CD4-positive, alpha-beta memory T cell (primary cell): ENCODE measurements at regions of chr5 and their contacts with region 1.

Region 1: GRCh38 chr5:138128334-138128733 is 10.9 kb downstream of the NME5 start:
- DNase-seq: no peak
- H3K4me3 ChIP-seq: no peak overlapping the region
- H3K4me3 Mint-ChIP-seq: no peak overlapping the region
- H3K27ac ChIP-seq: no peak overlapping the region
- H3K27ac Mint-ChIP-seq: no peak overlapping the region
- H3K4me1 ChIP-seq: no peaks in the 10 kb centered on the region
- H3K4me1 Mint-ChIP-seq: no peaks in the 10 kb centered on the region
- H3K27me3 ChIP-seq: no peaks in the 10 kb centered on the region
- H3K27me3 Mint-ChIP-seq: peaks cover 4 to 7% of the 10 kb centered on the region in 2 donors

Region 2: GRCh38 chr5:137778772-137779564 is 349.4 kb before region 1 on chr5:
- CTCF ChIA-PET with region 1: interaction called, 34 read pairs
- POLR2A ChIA-PET with region 1: interaction called, 3 read pairs
- intact Hi-C with region 1: loop called (anchors 1 kb)
- DNase-seq: peak in 4 of 5 donors; percentile 8 to 23 (median 18)
- H3K4me3 ChIP-seq: no peak overlapping the region
- H3K4me3 Mint-ChIP-seq: no peak overlapping the region
- H3K27ac ChIP-seq: no peak overlapping the region
- H3K27ac Mint-ChIP-seq: no peak overlapping the region
- H3K4me1 ChIP-seq: no peaks in the 10 kb centered on the region
- H3K4me1 Mint-ChIP-seq: no peaks in the 10 kb centered on the region
- H3K27me3 ChIP-seq: no peaks in the 10 kb centered on the region
- H3K27me3 Mint-ChIP-seq: peaks cover 4 to 5% of the 10 kb centered on the region in 2 donors

Region 3: GRCh38 chr5:138077065-138077696 is 51.2 kb before region 1 on chr5:
- CTCF ChIA-PET with region 1: interaction called, 88 read pairs
- POLR2A ChIA-PET with region 1: interaction called, 4 read pairs
- intact Hi-C with region 1: loop called (anchors 1 kb)
- DNase-seq: peak in 4 of 5 donors; percentile 28 to 46 (median 38)
- H3K4me3 ChIP-seq: no peak overlapping the region
- H3K4me3 Mint-ChIP-seq: no peak overlapping the region
- H3K27ac ChIP-seq: no peak overlapping the region
- H3K27ac Mint-ChIP-seq: no peak overlapping the region
- H3K4me1 ChIP-seq: no peaks in the 10 kb centered on the region
- H3K4me1 Mint-ChIP-seq: peaks cover 4 to 10% (median 8%) of the 10 kb centered on the region in 4 donors
- H3K27me3 ChIP-seq: no peaks in the 10 kb centered on the region
- H3K27me3 Mint-ChIP-seq: no peaks in the 10 kb centered on the region